WTC11 (cell line): ENCODE measurements at regions of chr11 and their contacts with region 1.

Region 1: GRCh38 chr11:34512840-34513681 is 533 bp downstream of the ELF5 start:
- DNase-seq: peak; percentile 78
- ATAC-seq: peak; percentile 94
- H3K4me3 Mint-ChIP-seq: no peak overlapping the region
- H3K27ac Mint-ChIP-seq: no peak overlapping the region
- H3K4me1 Mint-ChIP-seq: peaks cover 20% of the 10 kb centered on the region
- H3K27me3 Mint-ChIP-seq: no peaks in the 10 kb centered on the region
- CTCF ChIP-seq: peak; percentile 77

Region 2: GRCh38 chr11:34274723-34275401 is 238.2 kb before region 1 on chr11:
- CTCF ChIA-PET with region 1: no interaction called
- POLR2A ChIA-PET with region 1: no interaction called
- DNase-seq: no peak
- ATAC-seq: peak; percentile 34
- H3K4me3 Mint-ChIP-seq: no peak overlapping the region
- H3K27ac Mint-ChIP-seq: no peak overlapping the region; the same call in 1 of the 2 replicates
- H3K4me1 Mint-ChIP-seq: peaks cover 24% of the 10 kb centered on the region
- H3K27me3 Mint-ChIP-seq: no peaks in the 10 kb centered on the region
- CTCF ChIP-seq: no peak

Region 3: DNA sequence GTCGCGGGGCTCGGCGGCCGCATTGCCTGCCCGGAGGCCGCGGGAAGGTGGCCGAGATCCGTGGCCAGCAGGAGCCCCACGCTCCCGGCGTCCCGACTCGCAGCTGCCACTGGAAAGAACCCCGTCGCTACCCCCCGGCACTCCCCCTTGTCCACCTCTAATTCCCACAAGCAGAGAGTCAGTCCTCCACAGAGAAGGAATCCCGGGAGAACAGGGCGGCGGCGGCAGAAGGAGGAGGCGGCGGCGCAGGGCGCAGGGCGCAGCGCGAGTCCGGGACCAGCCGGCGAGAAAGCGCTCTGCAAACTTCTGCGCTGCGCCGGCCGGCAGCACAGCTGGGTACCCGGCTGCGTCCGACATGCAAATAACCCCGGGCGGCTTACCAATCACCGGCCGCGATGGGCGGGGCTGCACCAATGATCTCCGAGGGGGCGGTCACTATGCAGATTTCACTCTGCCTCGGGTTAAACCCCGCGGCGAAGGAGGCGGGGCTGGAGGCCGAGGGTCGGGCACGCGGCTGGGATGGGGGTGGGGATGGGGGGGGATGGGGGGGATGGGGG is 155.3 kb before region 1 on chr11 and contains the start of gene ABTB2:
- CTCF ChIA-PET with region 1: no interaction called
- POLR2A ChIA-PET with region 1: no interaction called
- DNase-seq: peak; percentile 99
- ATAC-seq: peak; percentile 86
- H3K4me3 Mint-ChIP-seq: peak within 1 kb of the TSS; percentile 85
- H3K27ac Mint-ChIP-seq: peak within 1 kb of the TSS; percentile 98
- H3K4me1 Mint-ChIP-seq: peaks cover 23% of the 10 kb centered on the region
- H3K27me3 Mint-ChIP-seq: peaks cover 42% of the 10 kb centered on the region
- CTCF ChIP-seq: no peak
- total RNA-seq, gene ABTB2: 7.9 to 12.8 TPM (median 8.4 TPM) in 3 replicates

Region 4: GRCh38 chr11:34476853-34477252 is 36.2 kb before region 1 on chr11:
- CTCF ChIA-PET with region 1: no interaction called
- POLR2A ChIA-PET with region 1: no interaction called
- DNase-seq: no peak
- ATAC-seq: no peak
- H3K4me3 Mint-ChIP-seq: no peak overlapping the region
- H3K27ac Mint-ChIP-seq: no peak overlapping the region
- H3K4me1 Mint-ChIP-seq: no peaks in the 10 kb centered on the region
- H3K27me3 Mint-ChIP-seq: no peaks in the 10 kb centered on the region; the same call in 1 of the 2 replicates
- CTCF ChIP-seq: no peak

Region 5: GRCh38 chr11:34487430-34487829 is 25.6 kb before region 1 on chr11:
- CTCF ChIA-PET with region 1: interaction called, 10 read pairs
- POLR2A ChIA-PET with region 1: no interaction called
- DNase-seq: no peak
- ATAC-seq: no peak
- H3K4me3 Mint-ChIP-seq: no peak overlapping the region
- H3K27ac Mint-ChIP-seq: no peak overlapping the region
- H3K4me1 Mint-ChIP-seq: no peaks in the 10 kb centered on the region
- H3K27me3 Mint-ChIP-seq: peaks cover 4% of the 10 kb centered on the region; the same call in 1 of the 2 replicates
- CTCF ChIP-seq: no peak

Region 6: DNA sequence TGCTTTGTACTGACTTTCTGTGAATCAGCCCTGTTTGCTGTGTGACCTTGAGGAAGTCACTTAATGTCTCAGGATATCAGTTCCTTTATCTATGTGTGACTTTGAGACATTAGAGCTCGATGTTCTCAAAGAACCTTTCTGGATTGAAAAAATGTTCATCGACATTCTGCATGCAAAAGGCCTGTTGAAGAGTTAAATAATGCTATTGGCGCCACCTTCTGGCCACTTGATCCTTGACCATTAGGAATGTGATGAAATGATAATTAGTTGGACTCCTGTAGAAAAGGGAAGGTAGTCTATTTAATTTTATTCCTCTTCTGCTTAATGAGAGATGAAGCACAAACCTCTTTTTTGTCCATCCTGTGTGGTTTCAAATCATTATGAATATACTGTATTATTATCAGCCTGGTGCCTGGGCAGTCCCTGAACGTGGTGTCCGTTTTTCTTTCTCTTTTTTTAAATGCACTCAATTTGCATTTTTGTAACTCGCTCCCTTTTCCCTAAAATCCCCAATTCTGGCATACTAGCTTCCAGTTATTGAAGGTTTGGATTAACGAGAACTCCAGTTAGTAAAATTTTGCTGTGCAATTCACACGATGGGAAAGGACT is 20.2 kb before region 1 on chr11:
- CTCF ChIA-PET with region 1: interaction called, 17 read pairs
- POLR2A ChIA-PET with region 1: no interaction called
- DNase-seq: peak; percentile 57
- ATAC-seq: peak; percentile 50; the same call in 1 of the 2 replicates
- H3K4me3 Mint-ChIP-seq: no peak overlapping the region
- H3K27ac Mint-ChIP-seq: no peak overlapping the region
- H3K4me1 Mint-ChIP-seq: no peaks in the 10 kb centered on the region
- H3K27me3 Mint-ChIP-seq: no peaks in the 10 kb centered on the region
- CTCF ChIP-seq: peak; percentile 47; the same call in 1 of the 2 replicates

Region 7: GRCh38 chr11:34501500-34501899 is 11.6 kb before region 1 on chr11:
- CTCF ChIA-PET with region 1: interaction called, 24 read pairs
- POLR2A ChIA-PET with region 1: no interaction called
- DNase-seq: no peak
- ATAC-seq: no peak
- H3K4me3 Mint-ChIP-seq: no peak overlapping the region
- H3K27ac Mint-ChIP-seq: no peak overlapping the region
- H3K4me1 Mint-ChIP-seq: no peaks in the 10 kb centered on the region
- H3K27me3 Mint-ChIP-seq: no peaks in the 10 kb centered on the region
- CTCF ChIP-seq: no peak

Region 8: DNA sequence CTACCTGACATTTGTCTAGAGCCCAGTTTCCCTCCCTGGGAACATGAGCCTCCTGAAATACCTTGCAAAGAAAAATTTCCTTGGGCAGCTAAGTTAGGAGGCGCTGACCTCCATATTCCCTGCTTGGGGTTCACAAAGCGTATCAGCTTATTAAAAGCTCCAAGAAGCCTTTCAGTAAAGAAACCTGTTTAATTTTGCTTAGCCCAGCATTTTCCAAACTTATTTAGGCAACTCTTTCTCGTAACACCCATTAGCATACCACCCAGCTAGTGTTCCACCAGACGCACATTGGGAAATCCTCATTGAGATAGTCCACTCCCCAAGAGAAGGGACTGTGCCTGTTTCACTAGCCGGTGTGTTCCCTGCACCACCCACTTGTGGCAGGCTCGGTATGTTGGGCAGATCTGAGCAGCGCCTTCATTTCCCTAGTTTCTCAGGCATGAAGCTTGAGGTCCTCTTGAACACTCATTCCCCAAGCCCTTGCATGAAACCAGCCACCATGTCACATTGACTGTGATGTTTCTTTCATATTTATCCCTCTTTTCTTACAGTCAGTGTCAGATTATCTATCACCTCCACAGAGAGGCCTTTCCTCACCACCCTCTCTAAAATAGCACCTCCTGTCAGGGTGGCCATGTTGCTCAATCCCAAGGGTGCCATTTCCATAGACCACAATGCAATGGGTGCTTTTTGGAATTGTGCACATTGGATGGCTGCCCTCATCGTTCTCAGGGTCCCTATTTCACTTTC is 13.0 kb after region 1 on chr11:
- CTCF ChIA-PET with region 1: interaction called, 18 read pairs
- POLR2A ChIA-PET with region 1: no interaction called
- DNase-seq: no peak
- ATAC-seq: no peak
- H3K4me3 Mint-ChIP-seq: no peak overlapping the region
- H3K27ac Mint-ChIP-seq: no peak overlapping the region
- H3K4me1 Mint-ChIP-seq: no peaks in the 10 kb centered on the region
- H3K27me3 Mint-ChIP-seq: no peaks in the 10 kb centered on the region; the same call in 1 of the 2 replicates
- CTCF ChIP-seq: no peak

Region 9: GRCh38 chr11:34565417-34566207 is 52.6 kb after region 1 on chr11:
- CTCF ChIA-PET with region 1: interaction called, 11 read pairs
- POLR2A ChIA-PET with region 1: no interaction called
- DNase-seq: peak; percentile 39
- ATAC-seq: peak; percentile 90
- H3K4me3 Mint-ChIP-seq: no peak overlapping the region
- H3K27ac Mint-ChIP-seq: no peak overlapping the region
- H3K4me1 Mint-ChIP-seq: peaks cover 12% of the 10 kb centered on the region
- H3K27me3 Mint-ChIP-seq: no peaks in the 10 kb centered on the region; the same call in 1 of the 2 replicates
- CTCF ChIP-seq: peak; percentile 70

Region 10: GRCh38 chr11:34576331-34577119 is 63.5 kb after region 1 on chr11:
- CTCF ChIA-PET with region 1: no interaction called
- POLR2A ChIA-PET with region 1: no interaction called
- DNase-seq: no peak
- ATAC-seq: no peak
- H3K4me3 Mint-ChIP-seq: no peak overlapping the region
- H3K27ac Mint-ChIP-seq: no peak overlapping the region
- H3K4me1 Mint-ChIP-seq: no peaks in the 10 kb centered on the region
- H3K27me3 Mint-ChIP-seq: peaks cover 11% of the 10 kb centered on the region
- CTCF ChIP-seq: no peak